CD4-positive, alpha-beta T cell (primary cell): ENCODE measurements at regions of chr3 and their contacts with region 1.

Region 1: DNA sequence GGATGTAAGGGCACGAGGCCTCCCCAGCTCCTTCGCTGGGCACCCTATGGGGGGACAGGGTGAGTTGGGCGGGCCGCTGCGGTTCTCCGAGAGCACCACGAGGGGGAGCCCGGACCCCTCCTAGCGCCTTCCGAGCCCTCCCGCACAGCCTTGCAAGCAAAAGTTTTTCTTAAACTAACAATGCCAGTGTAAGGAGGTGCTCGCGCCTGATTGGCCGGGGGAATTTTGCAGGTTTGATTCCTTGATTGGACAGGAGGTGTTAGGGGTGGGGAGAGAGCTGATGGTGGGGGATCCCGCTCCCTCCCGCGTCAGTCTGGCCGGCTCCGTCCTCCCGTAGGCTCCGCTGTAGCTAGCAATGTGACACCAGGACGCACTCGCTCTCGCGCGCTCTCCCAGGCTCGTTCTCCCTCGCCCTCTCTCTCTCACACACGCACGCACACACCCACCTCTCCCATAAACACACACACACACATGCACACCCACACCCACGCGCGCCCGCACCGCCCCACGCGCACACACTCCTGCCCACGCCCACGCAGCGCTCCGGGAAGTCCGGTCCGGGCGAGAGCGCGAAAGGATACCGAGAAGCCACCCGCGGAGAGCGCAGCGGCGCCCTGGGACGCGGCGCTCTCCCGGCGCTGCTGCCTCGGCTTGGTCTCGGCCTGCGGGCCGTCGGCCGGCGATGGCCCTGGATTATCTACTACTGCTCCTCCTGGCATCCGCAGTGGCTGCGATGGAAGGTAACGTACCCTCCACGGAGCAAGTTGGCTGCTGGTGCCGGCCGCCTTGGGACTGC is at the start of gene EPHB1:
- DNase-seq: peak; percentile 5 to 65 (median 22)
- ATAC-seq: peak; percentile 39
- H3K4me3 ChIP-seq: peak within 1 kb of the TSS; percentile 46
- H3K4me3 Mint-ChIP-seq: peak within 1 kb of the TSS; percentile 84
- H3K27ac ChIP-seq: no peak within 1 kb of the TSS
- H3K27ac Mint-ChIP-seq: no peak within 1 kb of the TSS
- H3K4me1 ChIP-seq: peaks cover 5% of the 10 kb centered on the region
- H3K4me1 Mint-ChIP-seq: peaks cover 9% of the 10 kb centered on the region
- H3K27me3 ChIP-seq: peaks cover 18 to 45% of the 10 kb centered on the region in 2 experiments
- H3K27me3 Mint-ChIP-seq: peaks cover 75% of the 10 kb centered on the region
- CTCF ChIP-seq: peak; percentile 48
- total RNA-seq, gene EPHB1: 0.08 to 0.49 TPM

Region 2: DNA sequence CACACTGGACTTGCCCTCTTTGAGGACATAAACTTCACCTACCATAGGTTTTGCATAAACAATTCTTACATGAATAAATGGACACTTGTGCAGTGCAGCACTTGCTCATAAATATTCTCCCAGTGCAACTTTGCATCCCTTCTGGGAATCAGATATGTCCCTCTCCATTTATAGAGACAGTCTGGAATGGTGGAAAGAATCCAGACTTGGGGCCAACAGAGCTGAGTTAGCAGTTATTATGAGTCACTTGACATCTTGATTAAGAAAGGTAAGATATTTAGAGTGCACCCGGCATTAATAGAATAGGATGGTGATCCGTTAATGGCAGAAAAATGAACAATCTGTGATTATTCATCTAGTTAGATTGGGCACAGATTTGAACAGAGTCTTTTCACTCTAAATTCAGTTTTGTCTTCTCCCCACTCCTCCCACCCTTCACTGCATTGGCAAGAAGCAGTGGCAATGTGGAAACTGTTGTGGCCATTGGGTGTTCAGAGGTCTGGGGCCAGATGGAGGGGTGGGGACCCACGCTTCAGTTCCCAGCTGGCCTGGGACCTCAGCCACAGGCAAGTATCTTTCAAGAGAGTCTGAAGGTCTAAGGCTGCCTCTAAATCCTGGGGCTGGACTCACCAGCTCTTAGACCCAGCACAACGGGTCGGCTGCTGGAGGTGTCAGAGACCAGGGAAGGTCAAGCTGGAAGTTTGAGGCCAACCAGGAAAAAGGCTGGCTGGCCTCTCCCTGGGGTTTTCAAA is 85.4 kb before region 1 on chr3:
- CTCF ChIA-PET with region 1: no interaction called
- POLR2A ChIA-PET with region 1: no interaction called
- intact Hi-C with region 1: no loop called
- DNase-seq: no peak
- ATAC-seq: no peak
- H3K4me3 ChIP-seq: no peak overlapping the region
- H3K4me3 Mint-ChIP-seq: no peak overlapping the region
- H3K27ac ChIP-seq: no peak overlapping the region
- H3K27ac Mint-ChIP-seq: no peak overlapping the region
- H3K4me1 ChIP-seq: no peaks in the 10 kb centered on the region
- H3K4me1 Mint-ChIP-seq: no peaks in the 10 kb centered on the region
- H3K27me3 ChIP-seq: no peaks in the 10 kb centered on the region
- H3K27me3 Mint-ChIP-seq: no peaks in the 10 kb centered on the region
- CTCF ChIP-seq: no peak

Region 3: DNA sequence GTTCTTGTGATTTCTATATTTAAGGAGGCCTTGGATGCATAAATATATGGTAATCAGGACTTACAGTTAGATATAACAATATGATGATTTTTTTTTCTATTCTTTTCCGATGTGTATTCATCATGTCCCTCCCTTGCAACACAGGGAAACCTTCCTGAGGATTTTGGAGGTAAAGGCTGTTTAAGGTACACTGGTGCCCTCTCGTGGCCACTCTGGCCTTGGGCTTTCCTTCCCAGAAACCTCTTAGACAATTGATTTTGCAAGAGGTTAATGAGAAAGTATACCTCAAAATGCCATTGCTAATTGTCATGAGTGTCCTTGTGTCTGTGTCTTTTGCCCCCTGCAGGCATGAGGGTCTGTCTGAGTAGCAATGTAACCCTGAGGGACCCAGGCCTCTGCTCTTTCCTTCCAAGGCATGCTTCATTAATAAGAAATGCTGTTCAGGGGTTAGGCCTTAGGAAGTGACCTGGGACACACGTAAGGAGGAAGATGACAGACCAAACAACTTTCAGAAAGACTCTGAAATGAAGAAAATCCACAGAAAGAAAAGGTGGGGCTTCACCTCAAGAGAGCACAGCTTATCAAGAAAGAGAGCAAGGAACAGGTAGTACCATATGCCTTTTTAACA is 1100.1 kb after region 1 on chr3:
- CTCF ChIA-PET with region 1: no interaction called
- POLR2A ChIA-PET with region 1: no interaction called
- intact Hi-C with region 1: loop called in 1 of 2 experiments (anchors 10 kb)
- DNase-seq: peak in 9 of 14 experiments; percentile 0 to 48 (median 12)
- ATAC-seq: no peak
- H3K4me3 ChIP-seq: no peak overlapping the region
- H3K4me3 Mint-ChIP-seq: no peak overlapping the region
- H3K27ac ChIP-seq: no peak overlapping the region
- H3K27ac Mint-ChIP-seq: no peak overlapping the region
- H3K4me1 ChIP-seq: no peaks in the 10 kb centered on the region
- H3K4me1 Mint-ChIP-seq: no peaks in the 10 kb centered on the region
- H3K27me3 ChIP-seq: no peaks in the 10 kb centered on the region
- H3K27me3 Mint-ChIP-seq: peaks cover 8% of the 10 kb centered on the region
- CTCF ChIP-seq: peak; percentile 47

Region 4: GRCh38 chr3:136042608-136043221 is 1247.6 kb after region 1 on chr3:
- CTCF ChIA-PET with region 1: no interaction called
- POLR2A ChIA-PET with region 1: no interaction called
- intact Hi-C with region 1: loop called in 1 of 2 experiments (anchors 5 kb)
- DNase-seq: peak in 3 of 14 experiments; percentile 17 to 20 (median 19)
- ATAC-seq: no peak
- H3K4me3 ChIP-seq: no peak overlapping the region
- H3K4me3 Mint-ChIP-seq: no peak overlapping the region
- H3K27ac ChIP-seq: no peak overlapping the region
- H3K27ac Mint-ChIP-seq: no peak overlapping the region
- H3K4me1 ChIP-seq: no peaks in the 10 kb centered on the region
- H3K4me1 Mint-ChIP-seq: no peaks in the 10 kb centered on the region
- H3K27me3 ChIP-seq: peaks cover 10 to 14% of the 10 kb centered on the region in 2 experiments
- H3K27me3 Mint-ChIP-seq: peaks cover 23% of the 10 kb centered on the region
- CTCF ChIP-seq: peak; percentile 49